ENCODE measurements at regions of chr9 and their contacts with region 1.

Region 1: GRCh38 chr9:136631038-136632000 is 31.4 kb upstream of the EGFL7 start:
- DNase-seq: peak; percentile 91
- ATAC-seq: peak; percentile 95

Region 2: DNA sequence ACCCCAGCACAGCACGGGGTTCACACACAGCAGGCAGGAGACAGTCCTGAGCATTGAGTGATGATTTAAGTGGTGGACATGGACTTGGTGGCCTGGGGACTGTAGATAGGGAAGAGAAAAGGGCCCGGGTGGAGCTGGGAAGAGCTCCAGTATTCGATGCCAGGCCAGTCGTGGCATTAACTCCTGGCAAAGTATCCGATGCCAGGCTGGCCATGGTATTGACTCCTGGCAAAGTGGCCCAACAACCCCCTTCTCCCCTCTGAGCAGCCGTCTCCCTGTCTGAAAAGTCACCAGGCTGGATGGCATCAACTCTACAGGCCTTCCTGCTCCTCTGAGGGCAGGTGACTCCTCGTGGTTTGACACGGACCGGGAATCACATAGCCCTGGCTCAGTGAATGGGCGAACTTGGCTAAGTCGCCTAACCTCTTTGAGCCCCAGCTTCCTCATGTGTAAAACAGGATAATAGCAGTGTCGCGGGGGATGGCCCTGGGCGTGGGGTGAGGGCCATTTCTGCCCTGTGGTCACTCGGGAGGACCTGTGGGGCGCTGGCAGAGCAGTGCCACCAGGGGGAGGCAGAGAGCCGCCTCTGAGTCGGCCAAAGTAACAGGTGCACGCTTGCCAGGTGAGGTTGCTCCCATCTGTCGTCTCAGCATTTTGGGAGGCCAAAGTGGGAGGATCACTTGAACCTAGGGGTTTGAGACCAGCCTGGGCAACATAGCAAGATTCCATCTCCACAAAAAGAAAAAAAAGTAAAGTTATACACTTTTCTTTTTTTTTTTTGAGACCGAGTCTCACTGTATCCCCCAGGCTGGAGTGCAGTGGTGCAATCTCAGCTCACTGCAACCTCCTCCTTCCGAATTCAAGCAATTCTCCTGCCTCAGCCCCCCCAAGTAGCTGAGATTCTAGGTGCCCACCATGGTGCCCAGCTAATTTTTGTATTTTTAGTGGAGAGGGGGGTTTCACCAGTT is 142.8 kb before region 1 on chr9:
- intact Hi-C with region 1: loop called (anchors 2 kb)
- DNase-seq: peak; percentile 86
- ATAC-seq: peak; percentile 38

Measured in Right ventricle myocardium superior (tissue), 1 donor.